Panc1 (cell line): ENCODE measurements at regions of chr16 and their contacts with region 1.

Region 1: GRCh38 chr16:61344791-61345190 is 691.4 kb downstream of the CDH8 start:
- DNase-seq: no peak
- ATAC-seq: no peak
- H3K4me3 ChIP-seq: no peak overlapping the region
- H3K27ac ChIP-seq: no peak overlapping the region
- H3K4me1 ChIP-seq: no peaks in the 10 kb centered on the region
- H3K27me3 ChIP-seq: no peaks in the 10 kb centered on the region
- CTCF ChIP-seq: no peak

Region 2: GRCh38 chr16:61295311-61295710 is 49.5 kb before region 1 on chr16:
- CTCF ChIA-PET with region 1: no interaction called
- POLR2A ChIA-PET with region 1: no interaction called
- in situ Hi-C with region 1: no loop called
- intact Hi-C with region 1: no loop called
- DNase-seq: no peak
- ATAC-seq: no peak
- H3K4me3 ChIP-seq: no peak overlapping the region
- H3K27ac ChIP-seq: no peak overlapping the region
- H3K4me1 ChIP-seq: no peaks in the 10 kb centered on the region
- H3K27me3 ChIP-seq: no peaks in the 10 kb centered on the region
- CTCF ChIP-seq: no peak

Region 3: GRCh38 chr16:61323456-61323855 is 21.3 kb before region 1 on chr16:
- CTCF ChIA-PET with region 1: interaction called, 19 read pairs
- POLR2A ChIA-PET with region 1: no interaction called
- in situ Hi-C with region 1: no loop called
- intact Hi-C with region 1: no loop called
- DNase-seq: no peak
- ATAC-seq: no peak
- H3K4me3 ChIP-seq: no peak overlapping the region
- H3K27ac ChIP-seq: no peak overlapping the region
- H3K4me1 ChIP-seq: no peaks in the 10 kb centered on the region
- H3K27me3 ChIP-seq: no peaks in the 10 kb centered on the region
- CTCF ChIP-seq: no peak